ENCODE measurements at regions of chr2 and their contacts with region 1.

Region 1: DNA sequence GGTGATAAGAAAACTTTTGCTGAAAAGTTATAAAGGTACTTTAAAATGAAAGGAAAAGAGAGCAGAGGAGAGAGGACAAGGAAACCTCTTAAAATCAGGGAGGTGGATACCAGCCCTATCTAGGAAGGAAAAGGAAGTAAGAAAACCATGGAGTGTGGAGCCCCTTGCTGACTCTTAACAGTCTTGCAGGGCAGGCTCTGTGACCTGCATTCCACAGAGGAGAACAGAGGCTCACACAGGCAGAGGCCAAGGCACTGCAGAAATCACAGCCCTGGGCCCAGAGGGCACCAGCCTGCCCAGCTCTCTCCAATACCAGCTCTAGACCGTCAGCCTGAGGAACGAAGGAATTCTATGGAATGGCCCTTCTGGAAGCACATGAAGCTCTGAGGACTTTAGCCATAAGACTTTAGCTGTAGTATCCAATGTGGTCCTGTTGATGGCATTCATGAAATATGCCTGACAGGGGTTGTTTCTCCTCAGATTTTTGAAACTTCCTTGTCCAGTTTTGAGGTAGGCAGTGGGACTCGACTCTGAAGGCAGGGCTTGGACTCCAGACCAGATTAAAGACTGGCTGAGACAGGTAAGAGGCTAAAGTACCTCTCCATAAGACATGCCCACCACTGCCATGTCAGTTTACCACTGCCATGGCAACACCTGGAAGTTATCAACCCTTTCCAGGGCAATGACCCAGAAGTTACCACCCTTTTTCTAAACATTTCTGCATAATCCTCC is 216.3 kb downstream of the ANAPC1 start:
- DNase-seq: peak; percentile 69
- H3K4me3 Mint-ChIP-seq: no peak overlapping the region
- H3K27ac Mint-ChIP-seq: no peak overlapping the region
- H3K4me1 Mint-ChIP-seq: peaks cover 11% of the 10 kb centered on the region
- H3K27me3 Mint-ChIP-seq: no peaks in the 10 kb centered on the region
- CTCF ChIP-seq: peak; percentile 63

Region 2: DNA sequence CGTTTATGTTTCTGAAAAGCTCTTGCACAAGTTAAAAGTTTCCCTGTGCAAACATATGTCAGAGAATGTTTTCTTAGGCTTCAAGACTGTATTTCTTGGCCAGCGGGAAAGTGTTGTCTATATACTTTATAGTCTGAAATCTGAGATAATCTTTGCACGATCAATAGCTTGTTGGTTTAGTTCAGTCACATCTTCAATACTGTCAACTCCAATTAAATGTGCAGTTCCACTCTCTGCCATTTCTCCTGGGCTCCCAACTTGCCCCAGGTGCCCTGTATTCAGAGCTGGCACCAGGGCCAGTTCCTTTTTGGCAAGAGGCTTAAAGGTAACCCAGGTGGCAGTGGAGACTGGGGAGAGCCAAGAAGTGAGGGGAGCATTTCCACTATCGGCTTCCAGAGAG is 870.9 kb before region 1 on chr2:
- CTCF ChIA-PET with region 1: no interaction called
- POLR2A ChIA-PET with region 1: no interaction called
- intact Hi-C with region 1: no loop called
- DNase-seq: no peak
- H3K4me3 Mint-ChIP-seq: no peak overlapping the region
- H3K27ac Mint-ChIP-seq: no peak overlapping the region
- H3K4me1 Mint-ChIP-seq: no peaks in the 10 kb centered on the region
- H3K27me3 Mint-ChIP-seq: peaks cover 100% of the 10 kb centered on the region
- CTCF ChIP-seq: no peak

Region 3: DNA sequence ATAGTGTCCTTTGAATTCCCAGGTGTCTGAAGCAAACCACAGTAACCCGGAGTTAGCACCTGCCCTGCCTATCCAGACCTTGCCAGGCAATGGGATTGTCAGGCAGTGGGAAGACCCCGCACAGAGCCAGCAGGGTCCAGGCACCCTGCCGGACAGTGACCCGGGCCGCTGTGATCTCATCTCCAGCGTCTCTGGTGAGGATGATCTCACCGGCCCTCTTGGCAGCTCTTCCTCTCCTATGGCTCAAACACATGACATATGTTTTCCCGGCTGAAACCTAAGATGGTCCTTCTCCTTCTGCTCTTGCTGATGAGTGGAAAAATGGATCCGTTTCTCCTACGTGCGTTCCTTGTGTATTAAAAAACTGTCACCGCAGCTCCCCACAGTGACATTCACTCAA is 860.2 kb before region 1 on chr2:
- CTCF ChIA-PET with region 1: interaction called, 3 read pairs
- POLR2A ChIA-PET with region 1: no interaction called
- intact Hi-C with region 1: loop called (anchors 1 kb)
- DNase-seq: no peak
- H3K4me3 Mint-ChIP-seq: no peak overlapping the region
- H3K27ac Mint-ChIP-seq: no peak overlapping the region
- H3K4me1 Mint-ChIP-seq: peaks cover 7% of the 10 kb centered on the region
- H3K27me3 Mint-ChIP-seq: peaks cover 70% of the 10 kb centered on the region
- CTCF ChIP-seq: no peak

Measured in MCF 10A (cell line).